ENCODE measurements at regions of chr11 and their contacts with region 1.

Region 1: GRCh38 chr11:108647701-108648527 is 17.0 kb upstream of the DDX10 start:
- DNase-seq: peak; percentile 83 to 96 (median 93)
- ATAC-seq: peak; percentile 87 to 90 (median 89)
- H3K4me3 ChIP-seq: peak overlapping the region in 1 of 3 donors; percentile 36
- H3K27ac ChIP-seq: peak overlapping the region; percentile 44 to 88 (median 72)
- H3K4me1 ChIP-seq: peaks cover 0 to 17% (median 8%) of the 10 kb centered on the region in 4 donors
- H3K27me3 ChIP-seq: no peaks in the 10 kb centered on the region
- CTCF ChIP-seq: peak; percentile 78 to 88 (median 84)
- POLR2A ChIP-seq: no peak

Region 2: DNA sequence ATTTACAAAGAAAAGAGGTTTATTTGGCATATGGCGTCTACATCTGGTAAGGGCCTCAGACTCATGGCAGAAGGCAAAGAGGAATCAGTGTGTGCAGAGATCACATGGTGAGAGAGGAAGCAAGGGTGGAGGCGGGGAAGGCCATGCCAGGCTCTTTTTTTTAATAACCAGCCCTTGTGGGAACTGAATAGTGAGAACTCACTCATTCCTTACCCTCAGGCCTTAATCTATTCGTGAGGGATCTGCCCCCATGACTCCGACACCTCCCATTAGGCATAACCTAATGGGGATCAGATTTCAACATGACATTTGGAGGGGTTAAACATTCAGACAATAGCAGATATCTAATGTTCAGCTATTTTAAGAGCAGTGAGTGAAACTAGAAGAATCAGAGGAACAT is 369.4 kb before region 1 on chr11:
- intact Hi-C with region 1: no loop called
- DNase-seq: no peak
- ATAC-seq: peak in 3 of 4 donors; percentile 38 to 63 (median 53)
- H3K4me3 ChIP-seq: no peak overlapping the region
- H3K27ac ChIP-seq: no peak overlapping the region
- H3K4me1 ChIP-seq: peaks cover 0 to 8% (median 0%) of the 10 kb centered on the region in 4 donors
- H3K27me3 ChIP-seq: no peaks in the 10 kb centered on the region
- CTCF ChIP-seq: no peak
- POLR2A ChIP-seq: no peak

Region 3: GRCh38 chr11:108483163-108483562 is 164.8 kb before region 1 on chr11:
- intact Hi-C with region 1: no loop called
- DNase-seq: no peak
- ATAC-seq: no peak
- H3K4me3 ChIP-seq: no peak overlapping the region
- H3K27ac ChIP-seq: no peak overlapping the region
- H3K4me1 ChIP-seq: no peaks in the 10 kb centered on the region
- H3K27me3 ChIP-seq: no peaks in the 10 kb centered on the region
- CTCF ChIP-seq: no peak
- POLR2A ChIP-seq: no peak

Region 4: GRCh38 chr11:108593214-108593922 is 54.5 kb before region 1 on chr11 and contains the start of gene EXPH5:
- intact Hi-C with region 1: loop called in 1 of 2 experiments (anchors 10 kb)
- DNase-seq: peak; percentile 95 to 97 (median 96)
- ATAC-seq: peak; percentile 99 to 100 (median 99)
- H3K4me3 ChIP-seq: peak within 1 kb of the TSS; percentile 55 to 85 (median 72)
- H3K27ac ChIP-seq: peak within 1 kb of the TSS; percentile 26 to 89 (median 75)
- H3K4me1 ChIP-seq: peaks cover 0 to 6% (median 2%) of the 10 kb centered on the region in 4 donors
- H3K27me3 ChIP-seq: no peaks in the 10 kb centered on the region
- CTCF ChIP-seq: peak in 1 of 4 donors; percentile 5
- POLR2A ChIP-seq: peak; percentile 46
- total RNA-seq, gene EXPH5: 8.3 to 12.4 (median 10.2) TPM

Measured in right lobe of liver (tissue), 6 donors.